Activated B cell treated with CpG ODN at 0.5 μM for 24 hours (primary cell): ENCODE measurements at regions of chr2 and their contacts with region 1.

Region 1: DNA sequence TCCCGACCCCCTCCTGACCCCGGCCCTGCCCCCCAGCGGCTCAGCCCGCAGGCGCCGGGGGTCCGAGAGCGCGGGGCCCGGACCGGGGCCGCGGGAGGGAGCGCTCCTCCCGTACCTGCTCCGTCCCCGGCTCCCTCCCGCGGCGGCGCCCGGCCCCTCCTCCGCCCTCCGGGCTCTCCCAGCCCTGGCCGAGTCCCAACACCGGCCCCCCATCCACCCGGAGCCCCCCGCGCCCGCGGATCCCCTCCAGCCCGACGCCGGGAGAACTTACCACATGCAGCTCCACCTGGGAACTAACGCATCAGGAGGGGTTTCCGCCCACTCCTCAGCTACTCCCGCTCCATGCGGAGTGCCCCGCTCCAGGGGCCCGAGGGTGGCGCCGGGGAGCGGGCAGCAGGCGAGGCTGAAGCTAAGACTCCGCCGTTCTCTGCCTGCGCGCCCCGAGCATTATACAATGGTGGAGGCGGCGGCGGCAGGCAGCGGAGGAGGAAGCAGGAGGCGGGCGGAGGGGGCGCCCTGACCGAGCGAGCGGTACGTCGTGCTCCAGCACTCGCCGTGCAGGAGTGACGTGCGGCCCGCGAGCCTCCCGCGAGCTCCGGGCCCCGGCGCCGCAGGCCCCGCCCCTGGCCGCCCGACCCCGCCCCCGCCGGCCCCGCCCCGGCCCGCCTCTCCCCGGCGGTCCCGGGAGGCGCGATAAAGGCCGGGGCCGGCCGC is at the start of gene SERTAD2:
- DNase-seq: peak; percentile 84
- ATAC-seq: peak; percentile 79
- H3K4me3 Mint-ChIP-seq: peak within 1 kb of the TSS; percentile 91
- H3K27ac Mint-ChIP-seq: peak within 1 kb of the TSS; percentile 93
- H3K4me1 Mint-ChIP-seq: peaks cover 82% of the 10 kb centered on the region
- H3K27me3 Mint-ChIP-seq: no peaks in the 10 kb centered on the region
- CTCF ChIP-seq: no peak
- total RNA-seq, gene SERTAD2: 45.6 and 47.3 TPM in 2 replicates

Region 2: DNA sequence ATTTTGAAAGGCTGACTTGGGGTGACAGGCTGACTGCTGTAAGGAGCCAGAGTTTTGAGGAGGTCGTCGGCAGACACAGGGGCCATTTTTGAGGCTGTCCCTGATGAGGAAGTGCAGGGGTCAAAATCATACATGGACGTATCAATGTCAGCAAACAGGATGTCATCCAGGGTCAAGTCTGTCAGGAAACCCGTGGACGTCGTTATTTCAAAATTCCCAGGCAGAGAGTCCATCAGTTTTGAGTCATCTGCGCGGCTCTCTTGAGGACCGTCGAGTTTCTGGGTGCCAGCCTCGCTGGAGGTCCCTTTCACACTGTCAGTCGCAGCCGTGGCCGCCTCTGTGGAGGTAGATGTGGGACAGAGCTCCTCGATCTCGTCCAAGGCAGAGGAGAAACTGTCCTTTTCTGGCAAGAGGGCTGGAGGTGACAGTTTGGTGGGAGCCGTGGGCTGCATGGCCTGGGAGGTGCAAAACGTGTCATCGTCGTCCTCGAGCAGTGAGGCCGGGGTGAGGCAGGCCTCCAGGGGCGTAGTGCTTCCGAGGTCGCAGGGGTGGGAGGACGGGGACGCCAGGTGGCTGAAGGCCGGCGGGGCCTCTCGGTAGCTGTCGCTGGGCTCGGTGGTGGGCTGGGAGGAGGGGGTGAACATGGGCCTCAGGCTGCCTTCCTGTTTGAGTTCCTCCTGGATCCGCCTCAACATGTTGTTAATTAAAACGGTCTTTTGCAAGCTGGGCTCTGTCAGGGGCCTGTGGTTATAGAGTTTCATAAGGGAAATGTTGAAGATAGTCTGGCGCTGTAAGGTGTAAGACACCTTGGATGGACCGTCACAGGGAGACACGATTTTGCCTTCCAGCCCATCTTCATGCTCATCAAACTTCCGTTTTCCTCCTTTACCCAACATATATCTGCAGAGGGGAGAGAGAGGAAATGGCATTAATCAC is 17.3 kb before region 1 on chr2:
- CTCF ChIA-PET with region 1: interaction called, 6 read pairs
- POLR2A ChIA-PET with region 1: interaction called, 54 read pairs
- intact Hi-C with region 1: no loop called
- DNase-seq: no peak
- ATAC-seq: peak; percentile 48
- H3K4me3 Mint-ChIP-seq: peak overlapping the region; percentile 68
- H3K27ac Mint-ChIP-seq: peak overlapping the region; percentile 94
- H3K4me1 Mint-ChIP-seq: peaks cover 71% of the 10 kb centered on the region
- H3K27me3 Mint-ChIP-seq: no peaks in the 10 kb centered on the region
- CTCF ChIP-seq: no peak

Region 3: GRCh38 chr2:64698668-64699444 is 45.4 kb after region 1 on chr2:
- CTCF ChIA-PET with region 1: interaction called, 3 read pairs
- POLR2A ChIA-PET with region 1: interaction called, 56 read pairs
- intact Hi-C with region 1: loop called (anchors 1 kb)
- DNase-seq: no peak
- ATAC-seq: peak; percentile 86
- H3K4me3 Mint-ChIP-seq: peak overlapping the region; percentile 52
- H3K27ac Mint-ChIP-seq: peak overlapping the region; percentile 89
- H3K4me1 Mint-ChIP-seq: peaks cover 51% of the 10 kb centered on the region
- H3K27me3 Mint-ChIP-seq: no peaks in the 10 kb centered on the region
- CTCF ChIP-seq: no peak

Region 4: DNA sequence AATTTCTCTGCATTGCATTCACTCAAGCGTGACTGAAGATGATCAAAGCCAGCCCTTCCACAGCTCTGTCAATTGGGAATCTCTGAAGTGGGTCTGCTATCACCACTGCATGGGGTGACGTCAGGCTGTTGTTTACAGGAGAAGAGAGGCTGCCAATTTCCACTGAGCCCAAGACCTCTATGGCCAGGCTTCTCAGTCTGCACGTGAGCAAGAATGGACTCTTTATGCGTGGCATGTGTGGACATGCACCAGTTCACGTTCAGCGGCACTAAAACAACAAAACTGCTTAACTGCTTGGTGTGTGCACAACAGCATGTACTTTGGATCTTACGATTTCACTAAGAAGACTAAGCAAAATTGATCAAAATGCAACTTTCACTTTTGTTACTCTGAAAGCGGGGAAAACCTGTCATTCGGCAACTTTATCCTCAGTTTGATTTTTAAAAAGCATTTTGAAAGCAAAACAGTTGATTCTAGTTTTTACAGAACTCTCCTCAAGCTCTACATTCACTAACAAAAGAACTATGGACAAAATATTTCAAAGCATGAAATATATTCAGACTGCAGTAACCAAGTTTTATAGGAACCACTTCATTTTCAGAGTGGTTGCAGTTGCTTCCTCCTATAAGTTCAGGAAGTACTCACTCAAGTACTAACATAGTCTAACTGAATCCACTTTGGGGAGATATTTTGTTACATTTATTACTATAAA is 77.2 kb after region 1 on chr2:
- CTCF ChIA-PET with region 1: interaction called, 32 read pairs
- POLR2A ChIA-PET with region 1: interaction called, 164 read pairs
- intact Hi-C with region 1: loop called (anchors 1 kb)
- DNase-seq: peak; percentile 24
- ATAC-seq: peak; percentile 45
- H3K4me3 Mint-ChIP-seq: peak overlapping the region; percentile 84
- H3K27ac Mint-ChIP-seq: peak overlapping the region; percentile 91
- H3K4me1 Mint-ChIP-seq: peaks cover 66% of the 10 kb centered on the region
- H3K27me3 Mint-ChIP-seq: no peaks in the 10 kb centered on the region
- CTCF ChIP-seq: no peak

Region 5: GRCh38 chr2:64839844-64840243 is 186.3 kb after region 1 on chr2:
- CTCF ChIA-PET with region 1: interaction called, 3 read pairs
- POLR2A ChIA-PET with region 1: interaction called, 66 read pairs
- intact Hi-C with region 1: no loop called
- DNase-seq: no peak
- ATAC-seq: peak; percentile 92
- H3K4me3 Mint-ChIP-seq: peak overlapping the region; percentile 61
- H3K27ac Mint-ChIP-seq: peak overlapping the region; percentile 92
- H3K4me1 Mint-ChIP-seq: peaks cover 51% of the 10 kb centered on the region
- H3K27me3 Mint-ChIP-seq: no peaks in the 10 kb centered on the region
- CTCF ChIP-seq: no peak

Region 6: DNA sequence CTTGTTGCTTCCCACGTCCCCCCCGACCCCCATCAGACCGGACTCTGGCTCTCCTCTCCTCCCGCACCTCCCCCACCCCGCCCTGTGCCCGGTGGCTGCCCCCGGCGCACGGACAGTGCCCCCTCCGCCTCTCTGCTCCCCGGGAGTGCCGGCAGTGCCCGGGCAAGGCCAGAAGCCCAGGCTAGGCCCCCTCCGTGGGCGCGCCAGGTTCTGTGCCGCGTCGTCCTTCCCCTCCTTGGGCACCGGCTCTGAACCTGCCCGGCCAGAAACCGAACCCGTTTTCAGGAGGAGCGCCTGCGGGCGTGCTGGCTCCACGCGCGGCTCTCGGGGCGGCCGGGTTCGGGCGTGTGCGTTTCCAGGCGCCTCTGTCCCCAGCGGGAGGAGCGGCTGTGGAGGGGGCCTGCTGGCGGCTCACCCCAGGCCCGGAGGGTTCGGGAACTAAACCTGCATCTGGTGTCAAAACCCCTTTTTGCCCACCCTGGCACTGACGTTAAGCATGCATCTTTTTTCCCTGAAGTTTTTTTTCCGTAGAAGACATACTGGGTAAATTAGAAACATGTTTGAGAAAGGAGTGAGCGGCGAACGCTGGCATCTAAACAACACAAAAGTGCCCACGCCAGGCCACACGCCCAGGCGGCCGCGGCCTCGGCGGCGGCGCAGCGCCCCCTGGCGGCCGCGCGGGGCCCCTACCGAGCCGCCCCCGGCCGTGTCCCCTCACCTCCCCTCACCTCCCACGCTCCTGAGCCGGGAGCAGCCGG is 211.7 kb after region 1 on chr2:
- CTCF ChIA-PET with region 1: interaction called, 47 read pairs
- POLR2A ChIA-PET with region 1: interaction called, 276 read pairs
- intact Hi-C with region 1: no loop called
- DNase-seq: peak; percentile 76
- ATAC-seq: peak; percentile 56
- H3K4me3 Mint-ChIP-seq: peak overlapping the region; percentile 41
- H3K27ac Mint-ChIP-seq: no peak overlapping the region
- H3K4me1 Mint-ChIP-seq: peaks cover 6% of the 10 kb centered on the region
- H3K27me3 Mint-ChIP-seq: no peaks in the 10 kb centered on the region
- CTCF ChIP-seq: no peak

Region 7: GRCh38 chr2:66164470-66164869 is 1511.0 kb after region 1 on chr2:
- CTCF ChIA-PET with region 1: no interaction called
- POLR2A ChIA-PET with region 1: no interaction called
- intact Hi-C with region 1: no loop called
- DNase-seq: no peak
- ATAC-seq: no peak
- H3K4me3 Mint-ChIP-seq: no peak overlapping the region
- H3K27ac Mint-ChIP-seq: no peak overlapping the region
- H3K4me1 Mint-ChIP-seq: no peaks in the 10 kb centered on the region
- H3K27me3 Mint-ChIP-seq: no peaks in the 10 kb centered on the region
- CTCF ChIP-seq: no peak